WTC11 (cell line): ENCODE measurements at regions of chr2 and their contacts with region 1.

Region 1: DNA sequence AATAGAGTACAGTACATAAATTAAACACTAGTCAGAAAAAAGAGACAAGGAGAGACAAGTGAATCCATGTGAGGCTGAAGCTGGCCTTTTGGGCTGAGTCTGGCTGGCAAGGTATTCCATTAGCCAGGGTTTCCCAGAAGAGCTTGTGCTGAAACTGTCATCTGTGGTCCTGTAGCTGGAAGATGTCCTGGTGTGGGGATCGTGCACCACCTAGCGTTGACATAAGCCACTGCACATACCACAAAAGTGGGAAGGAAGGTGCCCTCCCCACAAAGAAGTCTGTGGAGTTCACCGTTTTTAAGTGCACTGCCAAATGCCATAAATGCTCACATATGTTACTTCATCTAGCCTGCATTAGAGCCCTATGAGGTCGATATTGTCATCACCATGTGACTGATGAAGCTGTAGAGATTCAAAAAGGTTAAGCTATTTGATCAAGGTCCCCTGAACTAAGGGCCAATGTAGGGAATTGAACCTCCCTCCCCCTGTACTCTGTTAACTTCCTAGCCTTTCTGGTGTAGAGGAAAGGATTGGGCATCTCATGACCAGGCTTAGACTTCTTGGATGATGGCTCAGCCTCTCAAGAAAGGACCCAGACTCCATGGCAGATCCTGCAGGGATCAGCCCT is 31.9 kb upstream of the GALNT14 start:
- DNase-seq: peak; percentile 64
- ATAC-seq: peak; percentile 98
- H3K4me3 Mint-ChIP-seq: no peak overlapping the region
- H3K27ac Mint-ChIP-seq: no peak overlapping the region
- H3K4me1 Mint-ChIP-seq: no peaks in the 10 kb centered on the region
- H3K27me3 Mint-ChIP-seq: peaks cover 2% of the 10 kb centered on the region; the same call in 1 of the 2 replicates
- CTCF ChIP-seq: peak; percentile 83

Region 2: DNA sequence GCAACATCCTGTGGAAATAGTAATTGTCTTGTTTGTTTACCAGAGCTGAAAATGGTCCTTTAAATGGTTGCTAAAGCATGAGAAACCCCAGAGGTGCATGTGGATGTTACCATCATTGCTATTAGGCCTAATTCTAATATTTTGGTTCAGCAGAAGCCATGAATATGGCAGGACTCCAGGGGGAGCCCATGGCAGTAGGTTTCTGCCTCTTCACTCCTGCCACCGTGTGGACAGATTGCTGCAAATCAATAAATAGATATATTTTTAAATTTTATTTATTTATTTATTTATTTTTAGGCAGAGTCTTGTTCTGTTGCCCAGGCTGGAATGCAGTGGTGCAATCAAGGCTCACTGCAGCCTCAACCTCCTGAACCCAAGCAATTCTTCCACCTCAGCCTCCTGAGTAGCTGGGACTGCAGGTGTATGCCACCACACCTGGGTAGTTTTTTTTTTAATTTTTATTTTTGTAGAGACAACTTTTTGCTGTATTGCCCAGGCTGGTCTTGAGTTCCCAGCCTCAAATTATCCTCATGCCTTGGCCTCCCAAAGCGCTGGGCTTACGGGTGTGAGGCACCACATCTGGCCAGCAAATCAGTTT is 308.0 kb before region 1 on chr2:
- CTCF ChIA-PET with region 1: interaction called, 26 read pairs
- POLR2A ChIA-PET with region 1: no interaction called
- DNase-seq: peak; percentile 65
- ATAC-seq: peak; percentile 76
- H3K4me3 Mint-ChIP-seq: no peak overlapping the region
- H3K27ac Mint-ChIP-seq: no peak overlapping the region
- H3K4me1 Mint-ChIP-seq: no peaks in the 10 kb centered on the region
- H3K27me3 Mint-ChIP-seq: no peaks in the 10 kb centered on the region
- CTCF ChIP-seq: peak; percentile 60; the same call in 1 of the 2 replicates

Region 3: GRCh38 chr2:31038385-31038784 is 131.8 kb before region 1 on chr2:
- CTCF ChIA-PET with region 1: interaction called, 19 read pairs
- POLR2A ChIA-PET with region 1: no interaction called
- DNase-seq: peak; percentile 58
- ATAC-seq: peak; percentile 83
- H3K4me3 Mint-ChIP-seq: no peak overlapping the region
- H3K27ac Mint-ChIP-seq: no peak overlapping the region
- H3K4me1 Mint-ChIP-seq: peaks cover 4% of the 10 kb centered on the region
- H3K27me3 Mint-ChIP-seq: no peaks in the 10 kb centered on the region
- CTCF ChIP-seq: no peak

Region 4: DNA sequence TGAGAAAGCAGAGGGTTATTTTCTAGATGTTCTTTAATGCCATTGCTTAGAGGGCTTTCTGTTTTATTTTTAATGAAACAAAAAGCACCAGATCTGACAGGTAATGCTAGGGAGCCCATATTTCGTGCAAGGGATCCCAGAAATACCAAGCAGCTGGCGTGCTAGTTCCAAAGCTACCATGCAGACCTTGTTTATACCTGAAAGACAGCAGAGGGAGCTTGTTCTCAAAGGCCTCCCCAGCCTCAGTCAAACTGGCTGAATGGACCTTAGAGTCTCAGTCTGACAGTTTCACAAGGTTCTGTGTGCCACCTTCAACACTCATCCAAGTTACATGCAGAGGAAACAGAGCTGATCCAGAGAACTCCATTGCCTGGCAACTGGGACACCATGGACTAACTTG is 80.5 kb before region 1 on chr2:
- CTCF ChIA-PET with region 1: interaction called, 58 read pairs
- POLR2A ChIA-PET with region 1: no interaction called
- DNase-seq: no peak
- ATAC-seq: peak; percentile 51; the same call in 1 of the 2 replicates
- H3K4me3 Mint-ChIP-seq: no peak overlapping the region
- H3K27ac Mint-ChIP-seq: no peak overlapping the region
- H3K4me1 Mint-ChIP-seq: no peaks in the 10 kb centered on the region
- H3K27me3 Mint-ChIP-seq: no peaks in the 10 kb centered on the region; the same call in 1 of the 2 replicates
- CTCF ChIP-seq: no peak

Region 5: DNA sequence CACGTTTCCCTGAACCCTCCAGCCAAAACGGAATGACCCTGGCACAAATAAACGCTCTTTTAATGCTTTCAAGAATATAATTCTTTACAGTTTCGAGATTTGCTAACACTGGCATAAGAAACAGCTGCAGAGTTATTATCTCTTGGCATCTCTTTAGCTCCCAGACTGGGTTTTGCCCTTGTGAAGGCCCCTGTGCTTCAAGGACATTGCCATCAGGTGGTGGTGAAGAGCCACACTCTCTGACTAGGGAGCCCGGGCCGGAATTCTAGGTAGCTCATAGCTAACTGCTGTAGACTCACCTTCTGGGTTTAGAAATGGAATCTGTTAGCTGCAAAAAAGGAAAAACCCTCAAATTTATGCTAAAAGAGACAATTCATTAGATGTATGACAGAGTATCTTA is 18.7 kb before region 1 on chr2:
- CTCF ChIA-PET with region 1: interaction called, 48 read pairs
- POLR2A ChIA-PET with region 1: interaction called, 3 read pairs
- DNase-seq: peak; percentile 22
- ATAC-seq: peak; percentile 75
- H3K4me3 Mint-ChIP-seq: no peak overlapping the region
- H3K27ac Mint-ChIP-seq: no peak overlapping the region
- H3K4me1 Mint-ChIP-seq: no peaks in the 10 kb centered on the region
- H3K27me3 Mint-ChIP-seq: no peaks in the 10 kb centered on the region; the same call in 1 of the 2 replicates
- CTCF ChIP-seq: no peak

Region 6: DNA sequence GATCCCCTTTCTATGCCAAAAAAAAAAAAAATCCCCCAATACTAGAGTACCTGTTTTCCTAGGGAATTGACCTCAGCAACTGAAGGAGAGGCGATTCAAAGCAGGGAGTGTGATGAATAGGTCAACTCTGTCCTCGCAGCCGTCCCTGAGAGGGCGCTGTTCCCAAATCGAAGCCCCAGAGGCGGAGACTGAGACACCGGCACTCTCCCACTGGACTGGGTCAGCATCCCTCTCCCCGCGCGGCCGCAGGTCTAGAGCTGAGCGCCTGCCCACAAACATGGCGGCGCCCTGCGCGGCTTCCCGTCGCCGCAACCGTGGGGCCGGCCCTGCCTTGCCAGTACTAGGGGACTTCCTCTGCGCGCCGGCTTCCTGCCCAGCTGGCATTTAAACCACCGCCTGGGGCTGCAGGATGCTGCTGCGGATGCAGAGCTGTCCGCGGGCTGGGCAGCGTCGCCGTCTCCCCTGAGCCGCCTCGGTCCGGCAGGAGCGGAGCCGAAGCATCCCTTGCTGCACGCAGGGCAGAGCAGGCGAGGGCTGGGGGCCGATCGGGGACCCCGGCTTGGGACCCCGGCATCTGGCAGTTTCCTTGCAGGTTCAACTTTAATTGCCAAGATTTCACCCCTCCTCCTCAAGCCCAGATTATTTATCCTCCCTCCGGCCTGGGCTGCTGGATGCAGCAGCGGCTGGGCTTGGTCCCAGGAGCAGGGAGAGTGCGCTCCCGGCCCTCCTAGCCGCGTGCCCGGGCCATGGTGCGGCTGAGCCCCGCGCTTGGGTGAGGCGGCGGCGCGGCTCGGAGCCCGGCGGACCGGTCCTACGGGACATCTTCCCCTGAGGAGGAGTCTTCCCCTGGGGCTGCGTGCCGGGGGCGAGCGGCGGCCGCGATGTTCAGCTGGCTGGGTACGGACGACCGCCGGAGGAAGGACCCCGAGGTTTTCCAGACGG is 63.8 kb after region 1 on chr2 and contains the start of gene EHD3:
- CTCF ChIA-PET with region 1: interaction called, 10 read pairs
- POLR2A ChIA-PET with region 1: no interaction called
- DNase-seq: peak; percentile 97
- ATAC-seq: peak; percentile 98
- H3K4me3 Mint-ChIP-seq: peak within 1 kb of the TSS; percentile 74
- H3K27ac Mint-ChIP-seq: no peak within 1 kb of the TSS
- H3K4me1 Mint-ChIP-seq: peaks cover 20% of the 10 kb centered on the region
- H3K27me3 Mint-ChIP-seq: peaks cover 11% of the 10 kb centered on the region
- CTCF ChIP-seq: peak; percentile 57; the same call in 1 of the 2 replicates
- total RNA-seq, gene EHD3: 9.8 to 10.2 TPM (median 10.0 TPM) in 3 replicates